Naive thymus-derived CD4-positive, alpha-beta T cell (primary cell): ENCODE measurements at regions of chr2 and their contacts with region 1.

Region 1: GRCh38 chr2:173884025-173884802 is 81.0 kb downstream of the SP3 start:
- DNase-seq: peak in 4 of 9 donors; percentile 13 to 24 (median 18)
- ATAC-seq: peak; percentile 62
- H3K4me3 ChIP-seq: no peak overlapping the region
- H3K4me3 Mint-ChIP-seq: no peak overlapping the region
- H3K27ac ChIP-seq: no peak overlapping the region
- H3K27ac Mint-ChIP-seq: no peak overlapping the region
- H3K4me1 ChIP-seq: no peaks in the 10 kb centered on the region
- H3K4me1 Mint-ChIP-seq: peaks cover 0 to 4% (median 0%) of the 10 kb centered on the region in 7 donors
- H3K27me3 ChIP-seq: no peaks in the 10 kb centered on the region
- H3K27me3 Mint-ChIP-seq: peaks cover 15 to 32% (median 24%) of the 10 kb centered on the region in 5 donors

Region 2: GRCh38 chr2:173793709-173794565 is 90.3 kb before region 1 on chr2:
- CTCF ChIA-PET with region 1: no interaction called
- POLR2A ChIA-PET with region 1: no interaction called
- intact Hi-C with region 1: no loop called
- DNase-seq: no peak
- ATAC-seq: no peak
- H3K4me3 ChIP-seq: no peak overlapping the region
- H3K4me3 Mint-ChIP-seq: no peak overlapping the region
- H3K27ac ChIP-seq: no peak overlapping the region
- H3K27ac Mint-ChIP-seq: no peak overlapping the region
- H3K4me1 ChIP-seq: no peaks in the 10 kb centered on the region
- H3K4me1 Mint-ChIP-seq: no peaks in the 10 kb centered on the region
- H3K27me3 ChIP-seq: no peaks in the 10 kb centered on the region
- H3K27me3 Mint-ChIP-seq: peaks cover 15 to 33% (median 21%) of the 10 kb centered on the region in 5 donors

Region 3: DNA sequence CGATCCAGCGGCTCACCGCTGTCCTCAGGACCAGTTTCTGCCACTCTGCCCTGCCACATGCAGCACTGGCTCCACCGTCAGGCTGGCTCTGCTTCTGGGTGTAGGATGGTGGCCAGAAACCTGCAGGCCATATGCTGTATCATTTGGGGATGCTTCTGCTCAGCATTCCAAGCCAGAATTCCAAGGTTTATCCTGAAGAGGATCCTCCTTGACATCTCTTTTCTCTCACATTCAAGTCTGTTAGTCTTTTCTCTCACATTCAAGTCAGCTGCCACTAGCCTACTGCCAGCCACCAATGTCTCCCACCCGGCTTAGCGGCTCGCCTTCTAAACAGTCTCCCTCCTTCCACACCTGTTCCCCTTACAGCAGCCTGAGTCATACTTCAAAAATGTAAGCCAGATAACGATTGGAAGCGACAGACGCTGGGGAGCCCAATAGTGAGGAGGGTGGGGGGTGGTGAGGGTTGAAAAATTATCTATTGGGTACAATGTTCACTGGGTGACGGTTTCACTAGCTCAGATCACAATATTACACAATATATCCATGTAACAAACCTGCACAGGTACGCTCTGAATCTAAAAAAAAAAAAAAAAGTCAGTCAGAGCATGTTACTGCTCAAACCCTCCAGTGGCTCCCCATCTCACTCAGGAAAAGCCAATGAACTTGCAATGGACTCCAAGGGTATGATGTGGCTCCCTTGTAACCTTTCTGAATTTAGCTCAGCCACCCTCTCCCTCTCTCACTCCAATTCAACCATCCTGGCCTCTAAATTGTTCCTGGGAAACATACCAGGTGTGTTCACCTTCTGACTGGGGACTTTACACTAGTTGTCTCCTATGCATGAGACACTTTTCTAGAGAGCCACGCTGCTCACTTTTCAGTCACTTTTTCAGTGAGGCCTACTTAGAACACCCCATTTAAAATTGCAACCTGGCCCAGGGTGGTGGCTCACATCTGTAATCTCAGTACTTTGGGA is 119.8 kb after region 1 on chr2:
- CTCF ChIA-PET with region 1: no interaction called
- POLR2A ChIA-PET with region 1: interaction called, 3 read pairs
- intact Hi-C with region 1: loop called in 1 of 2 experiments (anchors 1 kb)
- DNase-seq: no peak
- ATAC-seq: no peak
- H3K4me3 ChIP-seq: no peak overlapping the region
- H3K4me3 Mint-ChIP-seq: no peak overlapping the region
- H3K27ac ChIP-seq: no peak overlapping the region
- H3K27ac Mint-ChIP-seq: no peak overlapping the region
- H3K4me1 ChIP-seq: no peaks in the 10 kb centered on the region
- H3K4me1 Mint-ChIP-seq: peaks cover 0 to 2% (median 0%) of the 10 kb centered on the region in 7 donors
- H3K27me3 ChIP-seq: no peaks in the 10 kb centered on the region
- H3K27me3 Mint-ChIP-seq: peaks cover 2 to 8% (median 5%) of the 10 kb centered on the region in 5 donors